Naive thymus-derived CD4-positive, alpha-beta T cell (primary cell): ENCODE measurements at regions of chr5 and their contacts with region 1.

Region 1: GRCh38 chr5:108260117-108260857 is 121.6 kb downstream of the FBXL17 start:
- DNase-seq: peak; percentile 22 to 62 (median 52)
- ATAC-seq: peak; percentile 81
- H3K4me3 ChIP-seq: no peak overlapping the region
- H3K4me3 Mint-ChIP-seq: peak overlapping the region in 4 of 10 donors; percentile 49 to 63 (median 56)
- H3K27ac ChIP-seq: no peak overlapping the region
- H3K27ac Mint-ChIP-seq: peak overlapping the region in 2 of 9 donors; percentile 19
- H3K4me1 ChIP-seq: no peaks in the 10 kb centered on the region
- H3K4me1 Mint-ChIP-seq: peaks cover 5 to 18% (median 8%) of the 10 kb centered on the region in 7 donors
- H3K27me3 ChIP-seq: no peaks in the 10 kb centered on the region
- H3K27me3 Mint-ChIP-seq: no peaks in the 10 kb centered on the region

Region 2: DNA sequence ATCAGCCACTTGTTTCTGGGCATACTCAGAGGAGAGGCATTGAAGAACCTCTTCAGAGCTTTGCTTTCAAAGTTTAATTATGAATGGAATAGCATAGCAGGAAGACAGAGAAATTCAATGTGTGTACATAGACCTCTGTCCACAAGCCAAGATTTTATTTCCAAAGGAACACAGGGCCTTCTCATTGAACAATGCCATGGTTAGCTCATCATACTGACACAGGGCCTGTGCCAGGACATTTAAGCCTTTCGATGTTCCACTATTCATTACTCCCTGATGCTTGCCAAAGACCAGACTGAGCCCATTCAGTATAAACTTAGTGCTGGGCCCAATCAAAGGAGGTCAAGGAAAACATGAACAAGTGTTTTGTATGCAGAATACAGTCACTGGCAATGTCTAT is 159.2 kb before region 1 on chr5:
- CTCF ChIA-PET with region 1: no interaction called
- POLR2A ChIA-PET with region 1: no interaction called
- intact Hi-C with region 1: no loop called
- DNase-seq: no peak
- ATAC-seq: no peak
- H3K4me3 ChIP-seq: no peak overlapping the region
- H3K4me3 Mint-ChIP-seq: no peak overlapping the region
- H3K27ac ChIP-seq: no peak overlapping the region
- H3K27ac Mint-ChIP-seq: no peak overlapping the region
- H3K4me1 ChIP-seq: no peaks in the 10 kb centered on the region
- H3K4me1 Mint-ChIP-seq: no peaks in the 10 kb centered on the region
- H3K27me3 ChIP-seq: no peaks in the 10 kb centered on the region
- H3K27me3 Mint-ChIP-seq: no peaks in the 10 kb centered on the region

Region 3: DNA sequence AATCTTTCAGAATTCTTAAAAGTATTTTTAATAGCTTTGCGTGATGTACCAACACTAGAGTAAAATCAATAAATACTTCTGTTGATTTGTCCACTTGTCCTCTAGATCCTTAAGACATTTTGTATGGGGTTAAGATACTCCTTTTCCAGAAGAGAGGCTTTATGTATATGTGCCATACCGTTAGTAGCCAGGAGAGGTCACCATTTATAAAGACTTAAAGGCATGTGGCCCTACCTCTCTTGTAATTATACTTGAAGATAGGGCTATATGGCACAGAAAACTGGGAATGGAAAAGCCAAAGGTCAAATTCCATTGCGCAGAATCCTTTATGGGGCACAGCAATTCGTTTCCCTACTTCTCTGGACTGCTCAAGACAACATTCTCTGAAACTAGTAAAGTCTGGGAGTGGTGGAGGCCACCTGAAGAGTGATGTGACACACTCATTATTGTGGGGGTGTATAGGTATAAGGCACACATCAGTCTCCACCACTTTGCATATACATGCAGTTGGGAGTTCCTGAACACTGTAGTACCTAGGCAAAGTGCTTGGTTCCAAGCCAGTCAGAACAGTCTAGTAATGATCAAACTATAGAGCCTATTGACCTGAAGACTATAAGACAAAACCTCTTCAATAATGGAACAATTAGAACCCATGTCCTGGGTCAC is 261.7 kb after region 1 on chr5:
- CTCF ChIA-PET with region 1: no interaction called
- POLR2A ChIA-PET with region 1: no interaction called
- intact Hi-C with region 1: loop called (anchors 2 to 5 kb)
- DNase-seq: peak in 5 of 9 donors; percentile 4 to 29 (median 16)
- ATAC-seq: peak; percentile 73
- H3K4me3 ChIP-seq: no peak overlapping the region
- H3K4me3 Mint-ChIP-seq: no peak overlapping the region
- H3K27ac ChIP-seq: no peak overlapping the region
- H3K27ac Mint-ChIP-seq: no peak overlapping the region
- H3K4me1 ChIP-seq: no peaks in the 10 kb centered on the region
- H3K4me1 Mint-ChIP-seq: peaks cover 0 to 3% (median 0%) of the 10 kb centered on the region in 7 donors
- H3K27me3 ChIP-seq: no peaks in the 10 kb centered on the region
- H3K27me3 Mint-ChIP-seq: peaks cover 0 to 21% (median 13%) of the 10 kb centered on the region in 5 donors